ENCODE measurements at regions of chr1 and their contacts with region 1.

Region 1: DNA sequence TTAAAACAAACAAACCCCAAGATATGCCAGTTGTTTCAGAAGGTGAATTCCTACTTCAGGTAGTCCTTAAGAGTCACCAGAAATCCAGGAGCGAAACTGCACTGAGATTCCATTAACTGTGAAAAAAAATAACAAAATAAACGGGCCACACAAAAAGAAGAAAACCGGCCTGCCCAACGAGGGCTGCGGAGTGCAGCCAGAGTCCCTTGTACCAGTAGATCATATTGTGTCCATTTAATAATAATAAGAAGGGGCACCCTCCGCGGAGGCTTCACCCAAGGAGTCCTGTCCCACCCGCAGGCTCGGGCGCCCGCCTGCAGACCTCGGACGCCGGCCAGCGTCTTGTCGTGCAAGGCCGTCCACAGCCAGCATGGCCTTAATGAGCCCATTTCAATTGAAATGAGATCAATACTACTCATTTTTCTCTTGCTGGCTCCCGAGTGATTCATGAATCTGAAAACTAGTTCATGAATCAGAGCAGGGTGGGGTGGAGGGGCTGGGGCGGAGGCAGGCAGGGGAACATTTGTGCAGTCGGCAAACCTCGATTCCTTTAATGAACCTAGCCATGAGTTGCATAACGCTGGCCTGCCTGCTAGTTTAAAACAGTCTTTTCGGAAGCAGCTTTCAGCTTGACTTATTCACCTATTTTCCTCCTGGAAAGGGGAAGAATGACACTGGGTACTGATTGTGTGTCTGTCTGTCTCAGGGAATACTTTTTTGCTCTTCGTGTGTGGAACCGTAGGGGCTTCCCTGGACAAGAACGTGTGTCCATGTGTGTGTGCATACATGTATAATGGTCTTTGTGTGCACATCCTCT is 113.1 kb upstream of the IRF2BP2 start:
- DNase-seq: no peak
- ATAC-seq: peak; percentile 32

Region 2: DNA sequence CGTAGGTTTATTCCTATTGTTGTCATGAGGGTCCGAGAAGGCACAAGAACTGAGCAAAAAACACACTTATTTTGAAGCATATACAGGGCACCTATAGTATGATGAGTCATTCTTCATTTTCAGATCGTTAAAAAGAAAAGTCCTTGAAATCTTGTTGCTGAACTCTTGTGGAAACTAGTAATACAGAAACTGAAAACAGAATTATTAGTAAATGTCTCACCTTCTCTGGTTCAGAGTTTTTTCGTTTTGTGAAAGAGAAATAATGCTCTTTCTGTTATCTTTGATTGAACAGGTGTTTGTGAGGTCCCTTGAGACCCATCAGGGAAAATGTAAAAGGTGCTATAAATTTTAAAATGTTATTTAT is 451.9 kb before region 1 on chr1:
- intact Hi-C with region 1: no loop called
- DNase-seq: no peak
- ATAC-seq: no peak

Region 3: DNA sequence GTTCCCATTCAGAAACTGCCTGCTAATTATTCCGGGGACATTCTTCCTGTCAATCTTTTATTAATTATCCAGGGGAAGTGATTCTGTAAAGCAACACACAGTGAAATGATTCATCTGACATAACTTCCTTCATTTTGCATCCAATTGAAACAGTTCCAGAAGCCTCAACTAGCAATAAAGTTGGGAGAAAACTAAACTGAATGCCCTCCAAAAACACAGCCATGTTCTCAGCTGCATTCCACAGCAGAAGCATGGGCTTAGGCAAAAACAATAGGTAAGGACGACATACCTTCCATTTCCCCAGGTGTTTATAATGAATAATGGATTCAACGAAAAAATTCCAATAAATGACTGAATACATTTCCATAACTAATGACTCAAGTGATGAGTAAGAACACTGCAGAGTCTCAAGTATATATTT is 207.3 kb before region 1 on chr1:
- intact Hi-C with region 1: no loop called
- DNase-seq: no peak
- ATAC-seq: no peak

Region 4: GRCh38 chr1:234533975-234534876 is 188.9 kb before region 1 on chr1:
- intact Hi-C with region 1: loop called (anchors 2 kb)
- DNase-seq: peak; percentile 93
- ATAC-seq: peak; percentile 15

Region 5: GRCh38 chr1:234862944-234863515 is 139.9 kb after region 1 on chr1:
- intact Hi-C with region 1: loop called (anchors 5 kb)
- DNase-seq: peak; percentile 83
- ATAC-seq: peak; percentile 68

Region 6: GRCh38 chr1:234918181-234918841 is 195.2 kb after region 1 on chr1:
- intact Hi-C with region 1: loop called (anchors 1 kb)
- DNase-seq: no peak
- ATAC-seq: peak; percentile 14

Region 7: DNA sequence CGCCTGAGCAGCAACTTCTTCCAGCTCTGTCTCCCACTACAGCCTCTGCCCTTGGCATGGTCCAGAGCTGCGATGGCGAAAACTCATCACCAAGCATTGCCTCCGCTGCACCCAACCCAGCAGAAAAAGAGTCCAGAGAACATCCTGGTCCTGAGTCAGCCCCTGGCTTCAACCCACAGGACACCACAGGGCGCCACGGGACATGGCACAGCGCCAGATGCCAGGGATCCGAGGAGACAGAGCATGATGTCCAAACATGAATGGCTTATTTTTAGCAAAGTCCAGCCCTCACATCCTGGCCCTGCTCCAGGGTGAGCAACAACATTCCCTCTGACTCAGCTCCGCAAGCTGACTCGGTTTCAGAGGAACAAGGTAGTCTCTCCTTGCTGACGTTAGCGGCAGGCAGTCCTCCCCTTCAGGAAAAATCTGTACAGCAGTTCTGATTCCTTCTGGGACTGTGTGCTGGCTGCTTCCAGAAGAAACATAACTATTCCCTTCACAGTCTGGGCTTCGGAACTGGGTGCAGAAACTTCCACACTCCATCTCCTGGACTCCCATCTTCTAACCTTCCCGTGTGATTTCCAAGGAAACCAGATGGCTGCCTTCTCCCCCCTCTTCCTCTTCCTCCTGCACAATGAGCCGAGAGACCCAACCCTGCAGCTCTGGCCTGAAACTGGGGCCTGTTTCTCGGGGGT is 274.2 kb after region 1 on chr1:
- intact Hi-C with region 1: loop called (anchors 1 kb)
- DNase-seq: peak; percentile 97
- ATAC-seq: peak; percentile 93